ENCODE measurements at regions of chr1 and their contacts with region 1.

Region 1: DNA sequence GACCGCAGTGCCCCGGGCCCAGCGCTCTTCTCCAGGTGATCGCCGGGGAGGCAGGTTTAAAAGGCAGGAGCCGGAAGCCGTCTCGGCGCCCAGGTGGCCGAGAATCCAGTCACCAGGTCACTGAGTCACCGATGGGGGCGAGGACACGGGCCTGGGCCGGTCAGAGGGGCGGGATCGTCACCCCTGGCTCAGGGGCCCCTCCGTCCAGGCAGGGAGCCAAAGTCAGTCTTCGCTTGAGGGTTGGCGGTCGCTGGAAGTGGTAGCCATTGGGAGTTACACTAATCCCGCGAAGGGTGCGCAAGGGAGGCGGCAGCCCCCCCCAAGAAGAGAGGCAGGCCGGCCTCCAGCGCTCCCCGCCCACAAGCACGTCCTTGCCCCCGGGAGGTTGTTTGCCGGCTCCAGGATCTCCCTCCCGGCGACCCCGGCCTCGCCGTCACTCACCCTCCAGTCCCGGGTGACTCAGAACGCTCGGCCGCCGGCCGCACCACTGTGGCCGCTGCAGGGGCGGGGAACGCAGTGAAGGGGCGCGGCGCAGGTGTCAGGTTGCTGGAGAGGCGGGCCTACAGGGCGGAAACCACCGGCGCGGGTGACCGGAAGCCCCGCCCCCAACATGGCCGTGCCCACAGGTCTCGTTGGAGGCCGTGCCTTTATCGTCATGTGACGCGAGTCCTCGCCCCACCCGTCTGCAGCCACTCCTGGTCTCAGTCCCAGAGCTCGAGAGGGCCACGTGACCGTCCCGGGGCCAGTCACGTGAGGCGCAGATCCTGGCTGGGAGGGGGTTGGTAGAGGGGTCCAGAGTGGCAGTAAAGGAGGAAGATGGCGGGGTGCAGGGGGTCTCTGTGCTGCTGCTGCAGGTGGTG is at the starts of genes CLCN6 and MTHFR:
- DNase-seq: peak; percentile 99
- H3K4me3 ChIP-seq: peak within 1 kb of the TSS; percentile 79
- H3K27ac ChIP-seq: peak within 1 kb of the TSS; percentile 88
- H3K4me1 ChIP-seq: peaks cover 42% of the 10 kb centered on the region
- H3K27me3 ChIP-seq: no peaks in the 10 kb centered on the region
- CTCF ChIP-seq: no peak
- total RNA-seq, gene CLCN6: 42.0 and 48.1 TPM in 2 replicates
- total RNA-seq, gene MTHFR: 23.3 and 25.8 TPM in 2 replicates

Region 2: GRCh38 chr1:11026052-11026451 is 779.6 kb before region 1 on chr1:
- CTCF ChIA-PET with region 1: no interaction called
- POLR2A ChIA-PET with region 1: no interaction called
- intact Hi-C with region 1: no loop called
- DNase-seq: no peak
- H3K4me3 ChIP-seq: no peak overlapping the region
- H3K27ac ChIP-seq: no peak overlapping the region
- H3K4me1 ChIP-seq: peaks cover 7% of the 10 kb centered on the region
- H3K27me3 ChIP-seq: no peaks in the 10 kb centered on the region
- CTCF ChIP-seq: no peak

Region 3: DNA sequence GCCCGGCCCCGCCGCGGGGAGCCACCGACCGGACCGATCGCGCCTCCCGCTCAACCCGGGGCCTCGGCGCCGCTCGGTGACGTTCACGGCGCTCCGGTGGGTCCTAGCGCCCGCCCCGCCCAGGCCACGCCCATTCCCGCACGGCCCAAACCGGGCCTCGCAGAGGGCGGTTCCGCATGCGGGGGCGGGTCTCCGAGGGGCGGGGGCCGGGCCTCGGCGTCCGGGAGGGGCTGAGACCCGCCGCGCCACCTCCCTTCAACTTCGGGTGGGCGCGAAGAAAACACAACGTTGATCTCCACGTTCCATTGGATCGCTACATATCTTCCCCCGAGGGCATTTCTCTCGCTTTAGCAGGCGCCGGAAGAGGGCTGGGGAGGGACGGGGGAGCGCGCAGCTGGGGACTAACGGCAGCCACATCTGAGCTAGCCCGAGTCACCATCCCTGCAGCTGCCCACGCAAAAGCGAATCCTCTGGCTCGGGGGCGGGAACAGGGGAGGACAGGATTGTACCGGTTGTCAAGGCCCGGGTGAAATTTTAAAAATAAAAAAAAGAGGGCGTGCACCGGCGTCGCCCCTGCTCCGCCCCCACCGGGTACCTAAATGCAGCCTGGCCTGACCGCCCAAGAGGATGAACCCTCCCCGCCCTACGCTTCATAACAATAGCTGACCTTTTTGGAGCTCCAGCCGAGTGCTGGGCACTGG is 124.5 kb before region 1 on chr1 and contains the start of gene MAD2L2:
- CTCF ChIA-PET with region 1: no interaction called
- POLR2A ChIA-PET with region 1: no interaction called
- intact Hi-C with region 1: loop called (anchors 5 kb)
- DNase-seq: peak; percentile 95
- H3K4me3 ChIP-seq: peak within 1 kb of the TSS; percentile 94
- H3K27ac ChIP-seq: peak within 1 kb of the TSS; percentile 95
- H3K4me1 ChIP-seq: peaks cover 42% of the 10 kb centered on the region
- H3K27me3 ChIP-seq: no peaks in the 10 kb centered on the region
- CTCF ChIP-seq: no peak
- total RNA-seq, gene MAD2L2: 134 and 155 TPM in 2 replicates

Region 4: DNA sequence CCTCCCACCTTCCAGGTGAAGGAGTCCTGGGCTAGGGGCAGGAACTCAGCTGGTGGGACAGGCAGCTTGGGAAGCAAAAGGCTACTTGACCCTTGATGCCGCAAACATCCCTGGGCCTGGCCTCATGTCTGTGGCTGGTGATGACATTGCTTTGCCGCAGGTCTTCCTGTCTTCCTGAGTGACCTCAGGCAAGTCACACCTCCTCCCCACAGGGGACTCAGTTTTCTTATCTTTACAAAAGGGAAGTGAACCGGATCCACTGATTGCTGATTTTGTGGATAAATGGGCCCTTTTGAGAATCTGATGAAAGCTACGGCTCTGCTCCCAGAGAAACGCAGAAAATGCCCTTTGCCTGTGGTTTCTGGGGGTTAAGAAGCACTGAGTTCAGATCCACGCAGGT is 149.5 kb after region 1 on chr1:
- CTCF ChIA-PET with region 1: no interaction called
- POLR2A ChIA-PET with region 1: interaction called, 18 read pairs
- intact Hi-C with region 1: no loop called
- DNase-seq: no peak
- H3K4me3 ChIP-seq: no peak overlapping the region
- H3K27ac ChIP-seq: no peak overlapping the region
- H3K4me1 ChIP-seq: no peaks in the 10 kb centered on the region
- H3K27me3 ChIP-seq: no peaks in the 10 kb centered on the region
- CTCF ChIP-seq: no peak

Measured in A673 (cell line).